Esophagus squamous epithelium (tissue), 5 donors: ENCODE measurements at regions of chr3 and their contacts with region 1.

Region 1: DNA sequence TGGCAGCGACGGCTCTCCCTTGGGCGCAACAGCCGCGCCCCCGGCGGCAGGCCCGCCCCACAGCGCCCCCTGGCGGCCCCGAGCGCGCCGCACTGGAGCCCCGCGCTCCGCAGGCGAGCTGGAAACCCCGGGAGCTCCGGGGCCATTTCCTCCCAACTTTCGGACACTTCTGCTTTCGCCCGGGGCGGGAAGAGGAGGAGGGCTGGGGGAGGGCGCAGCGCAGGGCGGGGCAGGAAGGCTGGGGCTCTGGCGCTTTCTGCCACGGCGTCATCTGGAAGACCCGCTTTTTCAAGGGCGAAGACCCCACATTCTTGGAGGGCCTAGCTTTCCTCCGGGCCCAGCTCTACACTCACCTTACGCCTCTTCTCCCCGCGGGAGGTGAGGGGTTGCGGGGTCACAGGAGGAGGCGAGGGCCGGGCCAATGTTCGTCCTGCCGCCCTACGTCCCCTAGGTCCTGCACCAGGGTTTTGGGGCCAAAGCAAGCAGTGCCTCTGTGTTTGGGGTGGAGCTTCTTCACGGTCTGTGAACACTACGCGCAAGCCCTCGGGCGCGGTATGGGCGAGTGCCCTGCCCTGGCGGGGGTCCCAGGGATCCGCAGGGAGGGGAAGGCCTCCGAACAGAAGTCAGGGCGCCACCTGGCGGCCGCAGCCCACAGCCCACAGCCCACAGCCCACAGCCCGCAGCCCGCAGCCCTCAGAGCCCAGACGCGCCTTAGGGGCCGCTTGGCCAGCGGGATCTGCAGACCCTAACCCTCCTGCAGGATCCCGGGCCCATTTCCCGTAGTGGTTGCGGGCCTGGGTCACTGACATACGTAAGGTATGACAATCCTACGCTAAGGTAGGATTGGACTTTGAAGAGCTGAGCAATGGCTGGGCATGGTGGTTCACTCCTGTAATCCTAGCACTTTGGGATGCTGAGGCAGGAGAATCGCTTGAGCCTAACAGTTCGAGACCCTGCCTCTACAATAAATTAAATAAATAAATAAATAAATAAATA is 31.1 kb downstream of the FOXL2 start:
- DNase-seq: peak; percentile 55
- H3K4me3 ChIP-seq: peak overlapping the region; percentile 56 to 88 (median 73)
- H3K27ac ChIP-seq: peak overlapping the region; percentile 91 to 97 (median 94)
- H3K4me1 ChIP-seq: peaks cover 3 to 27% (median 15%) of the 10 kb centered on the region in 3 donors
- H3K27me3 ChIP-seq: no peaks in the 10 kb centered on the region
- CTCF ChIP-seq: peak; percentile 74 to 97 (median 94)
- POLR2A ChIP-seq: peak in 1 of 4 donors; percentile 11

Region 2: GRCh38 chr3:138594150-138594934 is 321.5 kb before region 1 on chr3 and contains the start of gene CEP70:
- intact Hi-C with region 1: loop called (anchors 5 kb)
- DNase-seq: no peak
- H3K4me3 ChIP-seq: peak within 1 kb of the TSS; percentile 52 to 74 (median 72)
- H3K27ac ChIP-seq: peak within 1 kb of the TSS; percentile 93 to 97 (median 96)
- H3K4me1 ChIP-seq: peaks cover 0 to 36% (median 8%) of the 10 kb centered on the region in 3 donors
- H3K27me3 ChIP-seq: no peaks in the 10 kb centered on the region
- CTCF ChIP-seq: peak; percentile 77 to 91 (median 88)
- POLR2A ChIP-seq: peak in 3 of 4 donors; percentile 88 to 92 (median 89)
- total RNA-seq, gene CEP70: 11.4 to 43.3 (median 16.1) TPM

Region 3: GRCh38 chr3:138608322-138609135 is 307.3 kb before region 1 on chr3 and contains the start of gene FAIM:
- intact Hi-C with region 1: loop called (anchors 5 kb)
- DNase-seq: peak; percentile 6
- H3K4me3 ChIP-seq: peak within 1 kb of the TSS; percentile 71 to 90 (median 88)
- H3K27ac ChIP-seq: peak within 1 kb of the TSS; percentile 89 to 98 (median 96)
- H3K4me1 ChIP-seq: peaks cover 5 to 22% (median 9%) of the 10 kb centered on the region in 3 donors
- H3K27me3 ChIP-seq: no peaks in the 10 kb centered on the region
- CTCF ChIP-seq: no peak
- POLR2A ChIP-seq: no peak
- total RNA-seq, gene FAIM: 8.0 to 16.0 (median 11.1) TPM

Region 4: GRCh38 chr3:138696666-138697370 is 219.0 kb before region 1 on chr3:
- intact Hi-C with region 1: loop called (anchors 2 kb)
- DNase-seq: no peak
- H3K4me3 ChIP-seq: no peak overlapping the region
- H3K27ac ChIP-seq: no peak overlapping the region
- H3K4me1 ChIP-seq: no peaks in the 10 kb centered on the region
- H3K27me3 ChIP-seq: no peaks in the 10 kb centered on the region
- CTCF ChIP-seq: no peak
- POLR2A ChIP-seq: no peak

Region 5: DNA sequence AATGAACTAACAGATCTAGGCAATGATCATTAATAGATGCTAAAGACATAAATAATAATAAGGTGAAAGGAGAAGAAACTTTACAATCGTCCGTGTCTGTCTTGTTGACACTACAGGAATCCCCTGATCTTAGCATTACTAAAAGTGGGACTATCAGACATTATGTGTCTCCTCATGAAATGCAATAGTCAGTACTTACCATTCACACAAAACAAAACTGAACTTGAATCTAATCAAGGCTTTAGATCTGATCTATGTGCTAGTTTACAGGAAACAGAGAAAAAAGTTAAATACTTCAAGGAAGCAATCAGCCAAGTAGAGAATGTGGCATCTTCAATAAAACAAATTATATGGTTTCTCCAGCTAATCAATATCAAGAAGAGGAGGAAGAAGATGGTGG is 154.8 kb before region 1 on chr3:
- intact Hi-C with region 1: no loop called
- DNase-seq: no peak
- H3K4me3 ChIP-seq: no peak overlapping the region
- H3K27ac ChIP-seq: no peak overlapping the region
- H3K4me1 ChIP-seq: peaks cover 0 to 6% (median 0%) of the 10 kb centered on the region in 3 donors
- H3K27me3 ChIP-seq: no peaks in the 10 kb centered on the region
- CTCF ChIP-seq: no peak
- POLR2A ChIP-seq: no peak

Region 6: GRCh38 chr3:138834359-138835212 is 81.2 kb before region 1 on chr3 and contains the start of gene PIK3CB:
- intact Hi-C with region 1: loop called (anchors 10 kb)
- DNase-seq: peak; percentile 63
- H3K4me3 ChIP-seq: peak within 1 kb of the TSS; percentile 79 to 99 (median 95)
- H3K27ac ChIP-seq: peak within 1 kb of the TSS; percentile 92 to 97 (median 94)
- H3K4me1 ChIP-seq: peaks cover 7 to 35% (median 13%) of the 10 kb centered on the region in 3 donors
- H3K27me3 ChIP-seq: no peaks in the 10 kb centered on the region
- CTCF ChIP-seq: peak in 4 of 6 experiments; percentile 5 to 53 (median 39)
- POLR2A ChIP-seq: peak in 3 of 4 donors; percentile 32 to 84 (median 72)
- total RNA-seq, gene PIK3CB: 14.7 to 36.2 (median 28.5) TPM

Region 7: DNA sequence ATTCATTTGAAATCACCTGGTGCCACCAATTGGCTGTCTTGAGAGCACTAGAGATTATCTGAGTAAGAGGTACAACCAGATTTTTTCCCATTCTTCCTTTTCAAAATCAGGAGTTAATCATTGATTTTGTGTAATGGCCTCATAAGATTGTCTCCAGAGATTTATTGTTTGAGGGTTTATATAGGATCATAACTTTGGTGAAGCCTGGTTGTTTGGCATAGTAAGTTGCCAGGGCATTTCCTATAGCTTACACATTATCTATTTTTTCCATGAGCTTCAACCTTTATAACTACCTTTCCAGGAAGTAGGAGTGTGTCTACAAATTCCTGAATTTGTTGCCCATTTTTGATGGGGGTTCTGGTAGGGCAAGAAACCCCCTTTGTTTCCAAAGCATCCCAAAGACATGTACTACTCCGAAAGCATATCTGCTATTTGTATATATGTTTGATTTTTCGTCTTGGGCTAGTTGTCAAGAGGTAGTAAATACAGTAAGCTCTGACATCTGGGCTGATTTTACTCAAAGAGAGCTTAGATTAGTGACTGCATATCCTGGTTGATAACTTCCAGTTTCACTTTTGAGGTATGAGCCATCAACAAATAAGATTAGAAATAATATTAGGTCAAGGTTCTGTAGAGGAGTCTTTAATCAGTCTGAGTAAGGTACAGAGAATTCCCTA is 116.7 kb after region 1 on chr3:
- intact Hi-C with region 1: no loop called
- DNase-seq: no peak
- H3K4me3 ChIP-seq: no peak overlapping the region
- H3K27ac ChIP-seq: no peak overlapping the region
- H3K4me1 ChIP-seq: no peaks in the 10 kb centered on the region
- H3K27me3 ChIP-seq: no peaks in the 10 kb centered on the region
- CTCF ChIP-seq: no peak
- POLR2A ChIP-seq: no peak

Region 8: GRCh38 chr3:139187650-139188049 is 271.8 kb after region 1 on chr3:
- intact Hi-C with region 1: no loop called
- DNase-seq: no peak
- H3K4me3 ChIP-seq: no peak overlapping the region
- H3K27ac ChIP-seq: no peak overlapping the region
- H3K4me1 ChIP-seq: no peaks in the 10 kb centered on the region
- H3K27me3 ChIP-seq: no peaks in the 10 kb centered on the region
- CTCF ChIP-seq: no peak
- POLR2A ChIP-seq: no peak